Spleen (tissue), 13 donors: ENCODE measurements at regions of chr13 and their contacts with region 1.

Region 1: DNA sequence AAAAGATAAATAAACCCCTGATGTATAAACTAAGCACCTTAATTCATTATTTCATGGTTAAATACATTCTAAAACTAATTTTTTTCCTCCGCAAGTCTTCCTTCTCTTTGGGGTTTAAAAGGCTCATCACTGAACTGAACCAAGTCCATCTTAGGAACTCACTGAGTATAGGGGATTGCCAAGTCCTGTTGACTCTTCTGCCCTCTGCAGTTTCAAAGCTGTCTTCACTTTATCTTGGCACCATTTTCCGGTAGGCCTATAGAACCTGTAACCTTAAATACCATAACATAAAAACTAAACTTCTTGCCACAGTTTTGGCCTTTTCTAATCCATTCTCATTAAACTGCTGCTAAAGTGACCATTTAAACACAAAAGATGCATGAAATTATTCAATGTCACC is 66.5 kb upstream of the USPL1 start:
- DNase-seq: no peak
- H3K4me3 ChIP-seq: no peak overlapping the region
- H3K27ac ChIP-seq: no peak overlapping the region
- H3K4me1 ChIP-seq: no peaks in the 10 kb centered on the region
- H3K27me3 ChIP-seq: no peaks in the 10 kb centered on the region
- CTCF ChIP-seq: peak in 6 of 11 experiments; percentile 28 to 52 (median 40)
- POLR2A ChIP-seq: no peak

Region 2: DNA sequence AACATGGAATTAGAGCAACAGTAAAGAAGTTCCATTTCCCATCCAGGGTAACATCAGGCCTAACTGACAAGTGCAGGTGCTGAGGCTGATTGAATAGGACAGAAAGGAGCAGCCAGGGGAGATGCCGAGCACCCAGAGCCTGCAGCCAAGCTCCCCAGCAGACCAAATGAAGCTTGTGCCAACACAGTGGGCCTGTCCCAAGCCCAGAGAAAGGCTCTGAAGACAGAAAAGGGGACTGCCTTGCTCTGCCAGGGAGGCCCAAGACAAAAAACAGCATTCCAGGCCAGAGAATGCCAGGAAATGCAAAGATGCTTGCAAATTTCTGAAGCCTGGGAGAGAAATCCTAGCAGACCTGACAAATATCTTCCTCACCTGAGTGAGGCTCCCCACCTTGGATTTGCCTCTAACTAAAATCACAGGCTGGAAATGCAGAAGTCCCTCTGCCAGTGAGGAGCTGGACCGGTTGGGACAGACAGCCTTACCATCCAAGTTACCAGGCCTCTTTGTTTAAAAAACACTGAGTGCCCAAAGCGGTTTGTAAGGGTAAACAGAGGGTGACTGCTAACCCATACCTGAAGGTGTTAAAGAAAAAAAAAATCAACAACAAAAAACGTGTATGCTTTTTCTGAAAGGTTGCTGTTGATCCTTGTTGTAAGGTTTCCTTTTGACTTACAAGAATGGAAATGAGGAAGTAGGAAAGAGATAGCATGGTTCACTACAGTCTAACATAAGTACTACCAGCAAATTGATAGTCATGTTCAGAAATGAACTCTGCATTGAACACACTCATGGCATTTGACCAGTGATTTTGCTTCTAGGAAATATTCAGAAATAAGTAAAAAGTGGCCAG is 73.6 kb before region 1 on chr13:
- intact Hi-C with region 1: loop called (anchors 10 kb)
- DNase-seq: no peak
- H3K4me3 ChIP-seq: no peak overlapping the region
- H3K27ac ChIP-seq: no peak overlapping the region
- H3K4me1 ChIP-seq: peaks cover 0 to 9% (median 2%) of the 10 kb centered on the region in 6 donors
- H3K27me3 ChIP-seq: no peaks in the 10 kb centered on the region
- CTCF ChIP-seq: no peak
- POLR2A ChIP-seq: no peak